ENCODE measurements at regions of chr16 and their contacts with region 1.

Region 1: GRCh38 chr16:73172241-73172972 is 124.5 kb upstream of the ZFHX3 start:
- DNase-seq: peak; percentile 76
- ATAC-seq: peak; percentile 53
- H3K4me3 ChIP-seq: no peak overlapping the region
- H3K27ac ChIP-seq: peak overlapping the region; percentile 12
- H3K4me1 ChIP-seq: peaks cover 19% of the 10 kb centered on the region
- H3K27me3 ChIP-seq: no peaks in the 10 kb centered on the region
- CTCF ChIP-seq: peak; percentile 36

Region 2: DNA sequence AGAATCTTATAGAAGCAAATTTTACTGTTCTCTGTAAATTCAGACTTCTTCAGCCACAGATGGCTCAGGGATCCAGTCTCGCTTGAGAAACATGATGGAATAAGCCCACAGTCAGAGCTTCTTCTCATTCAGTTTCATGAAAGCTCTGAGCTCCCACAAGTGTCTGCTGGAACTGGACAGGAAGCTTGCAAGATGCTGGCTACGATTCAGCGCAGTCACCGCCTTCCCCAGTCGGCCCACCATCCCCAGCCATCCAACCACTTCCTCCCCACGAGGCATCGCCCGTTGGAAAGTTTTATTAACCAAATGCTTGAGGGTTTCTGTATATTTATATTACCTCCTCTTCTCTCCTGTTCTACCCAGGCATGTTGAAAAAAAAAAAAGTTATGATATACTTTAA is 296.2 kb before region 1 on chr16:
- intact Hi-C with region 1: no loop called
- DNase-seq: peak; percentile 72
- ATAC-seq: peak; percentile 84
- H3K4me3 ChIP-seq: no peak overlapping the region
- H3K27ac ChIP-seq: no peak overlapping the region
- H3K4me1 ChIP-seq: peaks cover 34% of the 10 kb centered on the region
- H3K27me3 ChIP-seq: no peaks in the 10 kb centered on the region
- CTCF ChIP-seq: no peak

Region 3: GRCh38 chr16:73068541-73069401 is 103.6 kb before region 1 on chr16:
- intact Hi-C with region 1: loop called (anchors 10 kb)
- DNase-seq: peak; percentile 90
- ATAC-seq: peak; percentile 89
- H3K4me3 ChIP-seq: no peak overlapping the region
- H3K27ac ChIP-seq: peak overlapping the region; percentile 85
- H3K4me1 ChIP-seq: peaks cover 59% of the 10 kb centered on the region
- H3K27me3 ChIP-seq: peaks cover 30% of the 10 kb centered on the region
- CTCF ChIP-seq: no peak

Measured in upper lobe of right lung (tissue), 1 donor.